ENCODE measurements at regions of chr17 and their contacts with region 1.

Region 1: GRCh38 chr17:59440784-59441441 is 109.5 kb downstream of the YPEL2 start:
- DNase-seq: peak; percentile 91 to 93
- ATAC-seq: peak; percentile 98
- H3K4me3 ChIP-seq: no peak overlapping the region
- H3K27ac ChIP-seq: peak overlapping the region; percentile 93 to 99
- H3K4me1 ChIP-seq: peaks cover 5 to 7% of the 10 kb centered on the region in 2 donors
- H3K27me3 ChIP-seq: no peaks in the 10 kb centered on the region

Region 2: GRCh38 chr17:59311130-59311920 is 129.6 kb before region 1 on chr17:
- intact Hi-C with region 1: loop called in 1 of 2 experiments (anchors 5 kb)
- DNase-seq: no peak
- ATAC-seq: peak; percentile 89
- H3K4me3 ChIP-seq: no peak overlapping the region
- H3K27ac ChIP-seq: no peak overlapping the region
- H3K4me1 ChIP-seq: peaks cover 0 to 2% of the 10 kb centered on the region in 2 donors
- H3K27me3 ChIP-seq: no peaks in the 10 kb centered on the region

Region 3: DNA sequence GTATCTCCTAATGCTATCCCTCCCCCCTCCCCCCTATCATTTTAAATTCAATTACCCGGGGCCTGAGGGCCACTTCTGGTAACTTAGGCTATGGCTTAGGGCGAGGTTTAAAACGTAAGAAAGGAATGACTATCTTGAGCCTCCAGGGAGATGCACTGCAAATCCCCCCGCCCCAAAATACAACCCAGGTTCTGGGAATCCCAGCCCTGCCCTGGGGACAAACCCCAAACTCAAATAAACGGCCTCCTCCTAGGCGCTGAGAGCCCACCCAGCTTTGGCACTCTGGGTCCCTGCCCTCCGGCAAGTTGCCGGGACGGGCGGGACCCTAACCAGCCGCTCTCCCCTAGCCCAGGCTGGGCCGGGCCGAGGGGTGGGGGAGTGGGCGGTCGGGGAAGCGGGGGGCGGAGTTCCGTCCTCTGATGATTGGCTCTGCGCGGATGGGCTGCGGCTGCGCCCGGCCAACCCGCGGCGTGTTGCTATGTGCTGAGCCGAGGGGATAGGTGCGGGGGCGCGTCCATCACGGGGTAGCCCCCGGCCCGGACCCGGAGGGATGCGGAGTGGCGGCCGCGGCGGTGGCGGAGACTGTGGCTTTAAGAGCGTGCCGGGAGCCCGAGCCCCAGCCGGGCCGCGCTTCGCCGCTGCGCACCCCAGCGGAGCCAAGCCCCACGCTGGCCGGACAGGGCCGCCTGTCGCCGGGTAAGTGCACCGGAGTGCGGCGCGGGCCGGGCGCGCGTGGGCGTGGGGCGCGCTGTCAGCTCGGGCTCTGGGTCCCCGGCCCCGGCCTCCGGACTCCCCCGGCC is 109.6 kb before region 1 on chr17 and contains the start of gene YPEL2:
- intact Hi-C with region 1: loop called (anchors 1 to 2 kb)
- DNase-seq: peak; percentile 98 to 99
- ATAC-seq: peak; percentile 94
- H3K4me3 ChIP-seq: peak within 1 kb of the TSS; percentile 81 to 97
- H3K27ac ChIP-seq: peak within 1 kb of the TSS; percentile 96 to 100
- H3K4me1 ChIP-seq: peaks cover 10 to 15% of the 10 kb centered on the region in 2 donors
- H3K27me3 ChIP-seq: no peaks in the 10 kb centered on the region
- total RNA-seq, gene YPEL2: 38.5 to 54.0 TPM

Region 4: DNA sequence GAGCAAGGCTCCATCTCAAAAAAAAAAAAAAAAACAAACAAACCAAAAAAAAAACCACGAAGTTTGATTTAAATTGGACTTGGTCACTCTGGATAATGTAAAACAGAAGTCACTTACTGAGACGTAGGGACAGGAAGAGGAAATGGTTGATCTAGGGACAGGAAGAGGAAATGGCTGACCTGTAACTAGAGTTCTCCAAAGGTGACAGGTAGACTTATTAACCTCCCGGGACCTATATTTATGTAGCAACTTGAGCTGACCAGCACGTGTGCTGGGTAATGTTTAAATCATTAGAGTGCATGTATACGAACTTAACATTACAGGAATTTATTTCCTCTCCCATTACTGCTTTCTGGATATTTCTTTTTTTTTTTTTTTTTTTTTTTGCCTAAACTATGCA is 42.9 kb after region 1 on chr17:
- intact Hi-C with region 1: loop called in 1 of 2 experiments (anchors 5 kb)
- DNase-seq: no peak
- ATAC-seq: no peak
- H3K4me3 ChIP-seq: no peak overlapping the region
- H3K27ac ChIP-seq: peak overlapping the region in 1 of 2 donors; percentile 57
- H3K4me1 ChIP-seq: peaks cover 0 to 2% of the 10 kb centered on the region in 2 donors
- H3K27me3 ChIP-seq: no peaks in the 10 kb centered on the region

Region 5: GRCh38 chr17:59498530-59499307 is 57.8 kb after region 1 on chr17:
- intact Hi-C with region 1: loop called in 1 of 2 experiments (anchors 10 kb)
- DNase-seq: no peak
- ATAC-seq: no peak
- H3K4me3 ChIP-seq: no peak overlapping the region
- H3K27ac ChIP-seq: peak overlapping the region in 1 of 2 donors; percentile 28
- H3K4me1 ChIP-seq: peaks cover 0 to 5% of the 10 kb centered on the region in 2 donors
- H3K27me3 ChIP-seq: no peaks in the 10 kb centered on the region

Measured in aorta (tissue), 5 donors.